ENCODE measurements at regions of chr9 and their contacts with region 1.

Region 1: DNA sequence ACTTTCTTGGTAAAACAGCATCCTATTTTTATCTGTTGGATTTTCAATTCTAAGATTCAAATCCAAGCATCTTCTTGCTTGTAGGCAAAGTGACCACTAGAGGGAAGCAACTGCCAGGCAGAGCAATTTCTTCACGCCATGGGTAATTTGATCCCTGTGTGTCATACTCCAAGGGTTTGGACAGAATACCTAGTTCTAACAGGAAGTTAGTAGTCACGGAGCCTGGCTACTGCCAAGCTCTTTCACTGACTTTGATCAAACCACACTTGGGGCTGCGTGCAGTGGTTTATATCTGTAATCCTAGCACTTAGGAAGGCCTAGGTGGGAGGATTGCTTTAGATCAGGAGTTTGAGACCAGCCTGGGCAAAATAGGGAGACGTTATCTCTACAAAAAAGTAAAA is 473.6 kb upstream of the TNC start:
- DNase-seq: peak; percentile 16
- H3K4me3 Mint-ChIP-seq: no peak overlapping the region
- H3K27ac Mint-ChIP-seq: no peak overlapping the region
- H3K4me1 Mint-ChIP-seq: no peaks in the 10 kb centered on the region
- H3K27me3 Mint-ChIP-seq: peaks cover 10% of the 10 kb centered on the region

Region 2: DNA sequence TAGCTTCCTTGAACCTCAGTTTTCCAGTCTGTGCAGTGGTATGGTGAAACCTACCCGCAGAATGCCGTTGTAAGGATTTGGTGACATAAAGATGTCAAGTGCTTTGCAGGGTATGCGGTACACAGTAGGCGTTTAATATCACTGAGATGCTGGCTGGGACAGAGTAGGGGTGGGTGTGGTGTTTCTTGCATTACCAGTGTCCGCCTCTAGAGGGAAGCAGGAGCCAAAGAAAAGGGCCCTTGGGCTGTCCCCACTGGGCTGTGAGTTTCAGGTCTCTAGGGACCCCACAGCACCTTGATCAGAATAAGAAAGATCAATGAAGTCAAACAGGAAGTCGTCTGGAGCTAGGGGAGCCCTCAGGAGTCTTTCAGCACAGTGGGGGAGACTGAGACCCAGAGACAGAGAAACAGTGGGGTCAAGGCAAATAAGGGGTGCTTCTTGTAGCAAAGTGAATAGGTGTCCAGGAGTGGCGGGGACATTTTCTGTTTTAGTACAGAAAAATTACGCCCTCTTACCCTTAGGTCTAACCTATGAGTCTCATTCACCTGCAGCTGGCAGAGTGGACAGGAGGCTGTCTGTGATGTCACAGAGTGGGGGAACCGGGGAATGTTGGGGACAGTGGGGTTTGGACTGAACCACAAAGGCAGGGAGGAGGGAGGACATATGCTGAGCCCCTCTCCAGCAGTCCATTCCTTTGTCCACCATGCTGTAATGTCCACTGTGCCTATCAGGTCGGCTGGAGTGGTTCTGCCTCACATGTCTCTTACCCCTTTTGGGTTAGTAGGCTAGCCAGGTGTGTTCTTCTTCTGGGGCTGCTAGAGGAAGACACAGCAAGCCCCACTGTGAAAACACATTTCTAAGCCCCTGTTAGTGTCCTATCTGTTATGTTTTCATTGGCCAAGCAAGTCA is 929.2 kb before region 1 on chr9:
- CTCF ChIA-PET with region 1: no interaction called
- intact Hi-C with region 1: loop called (anchors 5 kb)
- DNase-seq: peak; percentile 77
- H3K4me3 Mint-ChIP-seq: no peak overlapping the region
- H3K27ac Mint-ChIP-seq: no peak overlapping the region
- H3K4me1 Mint-ChIP-seq: peaks cover 14% of the 10 kb centered on the region
- H3K27me3 Mint-ChIP-seq: peaks cover 2% of the 10 kb centered on the region

Region 3: GRCh38 chr9:115296831-115297565 is 294.6 kb before region 1 on chr9:
- CTCF ChIA-PET with region 1: no interaction called
- intact Hi-C with region 1: no loop called
- DNase-seq: no peak
- H3K4me3 Mint-ChIP-seq: no peak overlapping the region
- H3K27ac Mint-ChIP-seq: no peak overlapping the region
- H3K4me1 Mint-ChIP-seq: no peaks in the 10 kb centered on the region
- H3K27me3 Mint-ChIP-seq: peaks cover 9% of the 10 kb centered on the region

Region 4: GRCh38 chr9:115492869-115493268 is 98.7 kb before region 1 on chr9:
- CTCF ChIA-PET with region 1: no interaction called
- intact Hi-C with region 1: no loop called
- DNase-seq: no peak
- H3K4me3 Mint-ChIP-seq: no peak overlapping the region
- H3K27ac Mint-ChIP-seq: no peak overlapping the region
- H3K4me1 Mint-ChIP-seq: no peaks in the 10 kb centered on the region
- H3K27me3 Mint-ChIP-seq: peaks cover 8% of the 10 kb centered on the region

Region 5: GRCh38 chr9:115640887-115641286 is 49.3 kb after region 1 on chr9:
- CTCF ChIA-PET with region 1: no interaction called
- intact Hi-C with region 1: no loop called
- DNase-seq: no peak
- H3K4me3 Mint-ChIP-seq: no peak overlapping the region
- H3K27ac Mint-ChIP-seq: no peak overlapping the region
- H3K4me1 Mint-ChIP-seq: no peaks in the 10 kb centered on the region
- H3K27me3 Mint-ChIP-seq: peaks cover 2% of the 10 kb centered on the region

Region 6: GRCh38 chr9:115808108-115808507 is 216.5 kb after region 1 on chr9:
- CTCF ChIA-PET with region 1: no interaction called
- intact Hi-C with region 1: no loop called
- DNase-seq: no peak
- H3K4me3 Mint-ChIP-seq: no peak overlapping the region
- H3K27ac Mint-ChIP-seq: no peak overlapping the region
- H3K4me1 Mint-ChIP-seq: no peaks in the 10 kb centered on the region
- H3K27me3 Mint-ChIP-seq: no peaks in the 10 kb centered on the region

Region 7: DNA sequence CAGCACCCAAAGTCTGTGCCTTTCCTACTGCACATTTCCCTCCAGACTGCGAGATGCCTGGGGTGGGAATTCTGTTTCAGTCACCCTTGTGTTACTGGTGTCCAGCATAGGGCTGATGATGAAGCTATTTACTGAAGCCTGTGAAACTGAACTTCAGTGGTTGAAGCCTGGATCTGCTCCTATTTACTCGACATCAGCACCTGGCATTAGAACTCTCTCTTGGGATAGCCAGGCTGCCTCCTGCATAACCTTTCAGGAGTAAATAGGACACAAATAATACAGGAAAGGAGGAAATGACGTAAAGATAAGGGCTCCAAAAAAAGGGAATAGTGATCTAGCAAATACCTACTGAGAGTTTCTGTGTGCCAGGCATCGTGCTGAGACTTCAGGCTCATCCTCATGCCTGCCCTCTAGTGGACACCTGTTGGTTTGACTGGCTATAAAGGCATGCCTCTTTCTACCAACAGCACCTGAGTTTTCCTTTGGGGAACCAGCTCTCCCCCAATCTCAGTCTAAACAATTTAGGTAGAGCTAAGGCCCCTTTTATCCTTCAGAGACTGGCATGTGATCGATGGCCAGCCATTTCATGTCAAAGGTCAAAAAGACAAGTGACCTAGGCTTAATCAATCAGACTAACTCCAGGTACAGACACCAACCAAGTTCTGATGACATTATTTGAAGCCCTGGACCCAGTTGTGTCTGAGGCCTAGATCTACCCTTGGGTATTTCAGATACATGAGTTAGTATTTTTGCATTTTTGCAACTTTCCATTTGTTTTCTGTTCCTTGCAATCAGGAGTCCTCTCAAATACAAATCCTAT is 903.4 kb after region 1 on chr9:
- CTCF ChIA-PET with region 1: no interaction called
- intact Hi-C with region 1: loop called (anchors 5 kb)
- DNase-seq: peak; percentile 58
- H3K4me3 Mint-ChIP-seq: no peak overlapping the region
- H3K27ac Mint-ChIP-seq: no peak overlapping the region
- H3K4me1 Mint-ChIP-seq: no peaks in the 10 kb centered on the region
- H3K27me3 Mint-ChIP-seq: no peaks in the 10 kb centered on the region

Region 8: GRCh38 chr9:116646661-116647512 is 1055.3 kb after region 1 on chr9:
- CTCF ChIA-PET with region 1: no interaction called
- intact Hi-C with region 1: loop called (anchors 5 kb)
- DNase-seq: no peak
- H3K4me3 Mint-ChIP-seq: no peak overlapping the region
- H3K27ac Mint-ChIP-seq: no peak overlapping the region
- H3K4me1 Mint-ChIP-seq: no peaks in the 10 kb centered on the region
- H3K27me3 Mint-ChIP-seq: no peaks in the 10 kb centered on the region

Region 9: GRCh38 chr9:116860509-116861120 is 1269.0 kb after region 1 on chr9:
- CTCF ChIA-PET with region 1: interaction called, 7 read pairs
- intact Hi-C with region 1: loop called (anchors 5 kb)
- DNase-seq: peak; percentile 37
- H3K4me3 Mint-ChIP-seq: no peak overlapping the region
- H3K27ac Mint-ChIP-seq: no peak overlapping the region
- H3K4me1 Mint-ChIP-seq: no peaks in the 10 kb centered on the region
- H3K27me3 Mint-ChIP-seq: peaks cover 7% of the 10 kb centered on the region